ENCODE measurements at regions of chr11 and their contacts with region 1.

Region 1: DNA sequence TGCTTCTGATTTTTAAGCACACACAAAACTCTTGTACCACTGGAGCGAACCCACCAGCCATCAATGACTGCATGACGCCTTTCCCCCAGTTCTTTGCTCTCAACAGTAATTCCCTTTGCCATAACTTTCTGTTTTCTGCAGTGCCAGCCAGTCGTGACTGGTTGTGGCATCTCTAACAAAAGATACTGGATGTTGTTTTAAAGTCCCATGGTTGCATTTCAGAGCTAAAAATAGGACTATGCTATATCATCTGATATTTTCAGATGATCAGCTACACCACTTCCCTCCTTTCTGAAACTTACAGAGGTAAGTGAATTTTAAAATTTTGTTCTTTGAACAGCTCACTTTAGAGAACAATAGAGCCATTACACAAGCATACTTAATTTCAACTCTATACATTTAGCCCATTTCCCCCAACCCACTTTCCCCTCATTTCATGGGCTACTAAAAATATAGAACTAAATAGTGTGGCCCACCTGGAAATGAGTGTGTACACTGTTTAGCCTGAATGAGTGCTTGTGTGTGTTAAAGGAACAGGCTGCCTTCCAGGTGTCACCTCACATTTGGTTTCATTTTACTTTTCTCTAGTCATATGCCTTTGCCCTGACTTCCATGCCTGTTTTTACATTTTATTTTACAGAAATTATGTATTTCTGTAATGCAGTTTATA is 136.9 kb upstream of the ZC3H12C start:
- DNase-seq: no peak
- ATAC-seq: no peak
- H3K4me3 ChIP-seq: no peak overlapping the region
- H3K27ac ChIP-seq: no peak overlapping the region
- H3K4me1 ChIP-seq: peaks cover 8% of the 10 kb centered on the region
- H3K27me3 ChIP-seq: no peaks in the 10 kb centered on the region
- CTCF ChIP-seq: no peak

Region 2: GRCh38 chr11:110185121-110185591 is 228.9 kb after region 1 on chr11:
- intact Hi-C with region 1: loop called in 1 of 2 experiments (anchors 10 kb)
- DNase-seq: no peak
- ATAC-seq: peak in 3 of 4 donors; percentile 37 to 48 (median 44)
- H3K4me3 ChIP-seq: no peak overlapping the region
- H3K27ac ChIP-seq: no peak overlapping the region
- H3K4me1 ChIP-seq: no peaks in the 10 kb centered on the region
- H3K27me3 ChIP-seq: no peaks in the 10 kb centered on the region
- CTCF ChIP-seq: no peak